B cell (primary cell): ENCODE measurements at regions of chr20 and their contacts with region 1.

Region 1: GRCh38 chr20:32652739-32653526 is 20.8 kb downstream of the C20orf203 start:
- DNase-seq: peak; percentile 84
- ATAC-seq: peak; percentile 96
- H3K4me3 ChIP-seq: no peak overlapping the region
- H3K4me3 Mint-ChIP-seq: no peak overlapping the region
- H3K27ac ChIP-seq: no peak overlapping the region
- H3K27ac Mint-ChIP-seq: no peak overlapping the region
- H3K4me1 ChIP-seq: peaks cover 4 to 7% of the 10 kb centered on the region in 2 donors
- H3K4me1 Mint-ChIP-seq: peaks cover 9% of the 10 kb centered on the region
- H3K27me3 ChIP-seq: peaks cover 0 to 4% (median 0%) of the 10 kb centered on the region in 4 experiments
- H3K27me3 Mint-ChIP-seq: peaks cover 5% of the 10 kb centered on the region
- CTCF ChIP-seq: peak; percentile 97

Region 2: GRCh38 chr20:32231847-32232246 is 421.1 kb before region 1 on chr20:
- CTCF ChIA-PET with region 1: no interaction called
- POLR2A ChIA-PET with region 1: no interaction called
- intact Hi-C with region 1: loop called (anchors 10 kb)
- DNase-seq: peak; percentile 22
- ATAC-seq: peak; percentile 58
- H3K4me3 ChIP-seq: no peak overlapping the region
- H3K4me3 Mint-ChIP-seq: no peak overlapping the region
- H3K27ac ChIP-seq: peak overlapping the region in 1 of 2 donors; percentile 54
- H3K27ac Mint-ChIP-seq: peak overlapping the region; percentile 77
- H3K4me1 ChIP-seq: peaks cover 4 to 16% of the 10 kb centered on the region in 2 donors
- H3K4me1 Mint-ChIP-seq: peaks cover 10% of the 10 kb centered on the region
- H3K27me3 ChIP-seq: no peaks in the 10 kb centered on the region
- H3K27me3 Mint-ChIP-seq: no peaks in the 10 kb centered on the region
- CTCF ChIP-seq: no peak

Region 3: GRCh38 chr20:32437391-32438074 is 215.4 kb before region 1 on chr20:
- CTCF ChIA-PET with region 1: no interaction called
- POLR2A ChIA-PET with region 1: no interaction called
- intact Hi-C with region 1: loop called (anchors 5 kb)
- DNase-seq: no peak
- ATAC-seq: no peak
- H3K4me3 ChIP-seq: no peak overlapping the region
- H3K4me3 Mint-ChIP-seq: no peak overlapping the region
- H3K27ac ChIP-seq: no peak overlapping the region
- H3K27ac Mint-ChIP-seq: no peak overlapping the region
- H3K4me1 ChIP-seq: peaks cover 3 to 7% of the 10 kb centered on the region in 2 donors
- H3K4me1 Mint-ChIP-seq: peaks cover 6% of the 10 kb centered on the region
- H3K27me3 ChIP-seq: no peaks in the 10 kb centered on the region
- H3K27me3 Mint-ChIP-seq: no peaks in the 10 kb centered on the region
- CTCF ChIP-seq: peak; percentile 37